BJ (cell line): ENCODE measurements at regions of chr12 and their contacts with region 1.

Region 1: GRCh38 chr12:31959161-31959700 is at the start of gene RESF1:
- DNase-seq: peak; percentile 20
- H3K4me3 ChIP-seq: peak within 1 kb of the TSS; percentile 55
- H3K27me3 ChIP-seq: no peaks in the 10 kb centered on the region
- CTCF ChIP-seq: no peak
- polyA plus RNA-seq, gene RESF1: 4.6 and 9.5 TPM in 2 replicates

Region 2: DNA sequence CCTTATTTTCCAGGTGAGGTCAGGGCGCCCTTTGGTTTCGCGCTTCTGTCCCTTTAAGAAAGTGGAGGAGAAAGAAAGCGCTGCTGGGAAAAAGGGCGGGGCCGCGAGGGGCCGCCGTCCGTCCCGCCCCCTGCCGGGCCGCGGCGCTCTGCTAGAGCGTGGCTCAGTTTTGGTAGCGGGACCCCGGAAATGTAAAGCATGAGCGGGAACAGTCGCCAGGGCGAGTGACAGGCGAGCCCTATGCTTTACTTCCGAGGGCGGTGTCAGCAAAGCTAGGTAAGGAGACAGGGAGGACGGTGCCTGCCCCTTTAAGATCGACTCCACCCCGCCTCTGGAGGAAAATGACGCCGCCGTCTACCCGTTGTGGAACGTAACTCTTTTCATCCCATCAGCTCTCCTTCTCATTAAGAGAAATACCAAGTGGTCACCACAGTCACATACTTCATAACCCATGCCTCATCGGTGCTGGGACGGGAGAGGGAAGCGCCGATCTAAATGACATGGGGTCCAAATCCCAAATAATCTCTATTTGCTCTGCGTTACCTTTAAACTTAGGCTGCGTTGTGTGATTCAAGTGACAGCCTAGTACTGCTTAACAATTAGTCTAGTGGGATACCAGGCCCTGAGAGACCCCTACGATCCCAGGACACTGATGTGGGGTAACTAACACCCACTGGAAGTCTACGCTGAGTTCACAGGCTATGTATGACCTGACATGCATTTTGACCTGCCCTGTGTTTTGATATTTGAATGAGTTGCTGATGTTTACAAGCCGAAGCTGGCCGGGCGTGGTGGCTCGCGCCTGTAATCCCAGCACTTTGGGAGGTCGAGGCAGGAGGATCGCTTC is 299.9 kb before region 1 on chr12 and contains the start of gene ETFBKMT:
- CTCF ChIA-PET with region 1: no interaction called
- POLR2A ChIA-PET with region 1: interaction called, 13 read pairs
- DNase-seq: peak; percentile 44
- H3K4me3 ChIP-seq: peak within 1 kb of the TSS; percentile 72
- H3K27me3 ChIP-seq: no peaks in the 10 kb centered on the region
- CTCF ChIP-seq: peak; percentile 50
- polyA plus RNA-seq, gene ETFBKMT: 0.94 and 1.5 TPM in 2 replicates

Region 3: DNA sequence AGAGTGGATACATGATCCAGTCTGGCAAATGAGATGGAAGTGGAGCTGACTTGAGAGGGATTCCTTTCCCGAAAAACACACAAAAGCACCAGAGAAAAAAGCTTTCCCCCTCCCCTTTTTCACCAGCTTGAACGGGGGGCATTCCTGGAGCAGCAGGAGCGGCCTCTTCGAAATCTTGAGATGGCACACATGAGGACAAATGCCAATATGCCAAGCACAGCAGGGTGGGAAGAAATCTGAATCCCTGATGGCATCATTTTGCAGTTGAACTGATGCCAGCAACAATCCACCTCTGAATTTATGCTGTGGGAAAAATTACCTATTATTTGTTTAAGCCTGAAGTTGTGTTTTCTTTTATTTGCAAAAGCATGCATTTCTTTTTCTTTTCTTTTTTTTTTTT is 117.7 kb after region 1 on chr12:
- CTCF ChIA-PET with region 1: no interaction called
- POLR2A ChIA-PET with region 1: no interaction called
- DNase-seq: no peak
- H3K4me3 ChIP-seq: no peak overlapping the region
- H3K27me3 ChIP-seq: no peaks in the 10 kb centered on the region
- CTCF ChIP-seq: no peak

Region 4: DNA sequence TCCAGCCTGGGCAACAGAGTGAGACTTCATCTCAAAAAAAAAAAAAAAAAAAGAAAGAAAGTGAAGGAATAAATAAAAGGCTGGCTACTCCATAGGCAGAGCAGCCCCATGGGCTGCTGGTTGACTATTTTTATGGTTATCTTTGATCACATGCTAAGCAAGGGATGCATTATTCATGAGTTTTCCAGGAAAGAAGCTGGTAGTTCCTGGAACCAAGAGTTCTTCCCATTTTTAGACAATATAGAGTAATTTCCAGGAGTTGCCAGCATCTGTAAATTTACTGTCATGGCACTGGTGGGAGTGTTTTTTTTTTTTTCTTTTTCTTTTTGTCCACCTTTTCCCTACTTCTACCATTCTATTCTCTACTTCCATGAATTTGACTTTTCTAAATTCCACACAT is 464.3 kb after region 1 on chr12:
- CTCF ChIA-PET with region 1: no interaction called
- POLR2A ChIA-PET with region 1: no interaction called
- DNase-seq: no peak
- H3K4me3 ChIP-seq: no peak overlapping the region
- H3K27me3 ChIP-seq: no peaks in the 10 kb centered on the region
- CTCF ChIP-seq: no peak